PC-3 (cell line): ENCODE measurements at regions of chr2 and their contacts with region 1.

Region 1: DNA sequence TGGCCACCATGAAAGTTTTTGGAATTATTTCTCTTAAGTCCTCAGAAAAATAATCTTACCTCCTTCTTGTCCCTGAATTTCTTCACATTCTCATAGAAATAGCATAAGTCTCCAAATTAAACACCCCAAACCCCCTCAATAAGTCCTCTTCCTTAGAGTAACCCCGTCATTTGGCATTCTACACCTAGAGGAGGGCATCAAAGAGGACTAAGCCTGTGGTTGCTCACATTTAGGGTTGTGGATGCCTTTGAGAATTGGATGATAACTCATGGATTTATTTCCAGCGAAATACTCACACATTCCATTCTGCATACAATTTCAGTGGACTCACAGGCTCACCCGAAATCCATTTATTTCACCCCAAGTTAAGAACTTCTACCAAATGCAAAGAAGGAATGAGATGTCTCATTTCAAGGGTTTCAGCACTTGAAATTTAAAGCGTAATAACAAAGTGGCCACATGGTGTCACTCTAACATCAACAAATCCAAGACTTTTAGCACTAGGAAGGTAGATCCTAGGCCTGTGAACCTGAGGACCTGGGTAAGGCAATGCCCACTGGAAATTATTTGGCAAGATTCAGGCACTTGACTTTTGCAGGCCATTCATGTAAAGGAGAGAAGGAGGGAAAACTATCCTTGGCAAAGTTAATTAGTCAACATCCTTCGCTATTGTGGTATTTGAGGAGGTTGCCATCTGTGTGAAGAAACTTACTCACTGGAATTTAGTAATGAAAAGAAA is 24.6 kb downstream of the DYTN start:
- DNase-seq: peak; percentile 82
- ATAC-seq: peak; percentile 82
- H3K4me3 ChIP-seq: no peak overlapping the region
- H3K27ac ChIP-seq: no peak overlapping the region
- H3K4me1 ChIP-seq: no peaks in the 10 kb centered on the region
- H3K27me3 ChIP-seq: no peaks in the 10 kb centered on the region
- CTCF ChIP-seq: peak; percentile 84

Region 2: DNA sequence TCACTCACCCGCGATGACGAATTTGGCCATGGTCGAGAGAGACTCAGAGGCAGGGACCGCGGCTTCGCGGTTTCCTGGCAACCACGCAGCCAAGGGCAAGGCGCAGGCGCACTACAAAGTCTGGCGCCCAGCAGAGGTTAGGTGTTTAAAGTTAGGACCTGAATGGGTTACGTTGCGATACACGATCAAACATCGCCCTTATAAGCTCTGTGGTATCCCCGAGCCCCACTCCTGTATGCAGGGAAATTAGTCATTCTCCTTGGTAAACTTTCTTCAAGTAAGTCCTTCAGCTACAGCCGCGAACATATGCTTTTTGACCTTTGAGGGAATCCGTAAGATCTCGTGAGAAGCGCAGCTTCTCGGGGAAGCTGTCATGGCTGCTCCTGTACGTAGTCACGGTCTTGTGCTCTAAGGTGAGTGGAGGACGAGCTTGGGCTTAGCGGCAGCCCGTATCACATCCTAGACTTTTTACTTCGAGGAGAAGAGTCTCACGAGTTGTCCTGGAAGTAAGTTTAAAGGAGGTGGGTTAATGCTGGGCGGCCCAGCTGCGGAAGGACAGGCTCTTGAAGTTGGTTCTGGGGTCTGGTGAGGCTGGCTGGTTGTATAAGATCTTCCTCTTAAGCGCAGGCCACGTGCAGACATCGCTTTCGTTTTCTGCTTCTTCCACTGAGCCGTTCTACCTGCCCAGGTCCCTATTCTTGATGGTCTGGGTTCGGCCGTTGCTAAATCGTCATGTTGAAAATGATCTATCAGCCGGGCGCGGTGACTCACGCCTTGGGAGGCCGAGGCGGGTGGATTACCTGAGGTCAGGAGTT is 71.9 kb after region 1 on chr2 and contains the starts of genes FASTKD2 and MDH1B:
- CTCF ChIA-PET with region 1: no interaction called
- POLR2A ChIA-PET with region 1: no interaction called
- intact Hi-C with region 1: loop called (anchors 5 kb)
- DNase-seq: peak; percentile 93
- ATAC-seq: peak; percentile 91
- H3K4me3 ChIP-seq: peak within 1 kb of the TSS; percentile 100
- H3K27ac ChIP-seq: peak within 1 kb of the TSS; percentile 87
- H3K4me1 ChIP-seq: peaks cover 24% of the 10 kb centered on the region
- H3K27me3 ChIP-seq: peaks cover 16% of the 10 kb centered on the region
- CTCF ChIP-seq: no peak
- total RNA-seq, gene FASTKD2: 31.2 and 41.4 TPM in 2 replicates
- total RNA-seq, gene MDH1B: 0.23 and 0.40 TPM in 2 replicates

Region 3: DNA sequence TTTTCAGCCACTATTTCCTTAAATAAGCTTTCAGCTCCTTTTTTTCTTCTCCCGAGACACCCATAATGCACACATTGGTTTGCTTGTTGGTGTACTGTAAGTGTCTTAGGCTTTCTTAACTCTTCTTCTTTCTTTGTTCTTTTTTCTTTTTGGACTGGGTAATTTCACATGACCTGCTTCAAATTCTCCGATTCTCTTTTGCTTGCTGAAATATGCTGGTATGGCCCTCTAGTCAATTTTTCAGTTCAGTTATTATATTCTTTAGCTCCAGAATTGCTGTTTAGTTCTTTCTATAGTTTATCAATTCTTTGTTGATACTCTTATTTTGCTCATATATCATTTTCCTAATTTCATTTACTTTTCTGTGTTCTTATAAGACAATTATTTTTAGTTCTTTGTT is 87.1 kb after region 1 on chr2:
- CTCF ChIA-PET with region 1: no interaction called
- POLR2A ChIA-PET with region 1: no interaction called
- intact Hi-C with region 1: loop called (anchors 1 kb)
- DNase-seq: no peak
- ATAC-seq: no peak
- H3K4me3 ChIP-seq: no peak overlapping the region
- H3K27ac ChIP-seq: no peak overlapping the region
- H3K4me1 ChIP-seq: no peaks in the 10 kb centered on the region
- H3K27me3 ChIP-seq: no peaks in the 10 kb centered on the region
- CTCF ChIP-seq: no peak

Region 4: GRCh38 chr2:206840999-206841398 is 147.4 kb after region 1 on chr2:
- CTCF ChIA-PET with region 1: no interaction called
- POLR2A ChIA-PET with region 1: no interaction called
- intact Hi-C with region 1: loop called (anchors 1 kb)
- DNase-seq: peak; percentile 18
- ATAC-seq: peak; percentile 40; the same call in 1 of the 2 replicates
- H3K4me3 ChIP-seq: no peak overlapping the region
- H3K27ac ChIP-seq: no peak overlapping the region
- H3K4me1 ChIP-seq: no peaks in the 10 kb centered on the region
- H3K27me3 ChIP-seq: no peaks in the 10 kb centered on the region
- CTCF ChIP-seq: peak; percentile 45